Activated CD8-positive, alpha-beta T cell treated with anti-CD3 and anti-CD28 coated beads for 36 hours (primary cell): ENCODE measurements at regions of chr1 and their contacts with region 1.

Region 1: DNA sequence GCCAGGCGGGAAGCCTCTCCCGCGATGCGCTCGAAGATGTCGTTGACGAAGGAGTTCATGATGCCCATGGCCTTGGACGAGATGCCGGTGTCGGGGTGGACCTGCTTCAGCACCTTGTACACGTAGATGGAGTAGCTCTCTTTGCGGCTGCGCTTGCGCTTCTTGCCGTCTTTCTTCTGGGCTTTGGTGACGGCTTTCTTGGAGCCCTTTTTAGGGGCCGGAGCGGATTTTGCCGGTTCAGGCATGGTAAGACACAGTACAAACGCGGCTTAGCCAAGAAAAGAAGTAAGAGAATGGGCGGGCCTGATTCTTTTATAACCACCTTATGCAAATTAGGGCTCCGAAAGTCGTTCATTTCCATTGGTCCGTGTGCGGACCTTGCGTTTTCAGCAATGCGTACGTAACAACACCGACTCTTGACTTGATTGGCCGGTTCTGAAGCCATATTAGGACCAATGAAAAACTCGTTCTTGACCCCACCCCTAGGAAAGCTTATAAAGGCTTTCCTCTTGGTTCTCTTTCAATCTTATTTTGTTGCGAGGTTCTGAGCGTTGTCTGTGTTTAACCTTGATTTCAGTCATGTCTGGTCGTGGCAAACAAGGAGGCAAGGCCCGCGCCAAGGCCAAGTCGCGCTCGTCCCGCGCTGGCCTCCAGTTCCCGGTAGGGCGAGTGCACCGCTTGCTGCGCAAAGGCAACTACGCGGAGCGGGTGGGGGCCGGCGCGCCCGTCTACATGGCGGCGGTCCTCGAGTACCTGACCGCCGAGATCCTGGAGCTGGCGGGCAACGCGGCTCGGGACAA is 12.8 kb upstream of the BOLA1 start:
- DNase-seq: peak; percentile 88
- ATAC-seq: peak; percentile 57
- H3K4me3 Mint-ChIP-seq: no peak overlapping the region
- H3K27ac Mint-ChIP-seq: no peak overlapping the region
- H3K4me1 Mint-ChIP-seq: peaks cover 15% of the 10 kb centered on the region
- H3K27me3 Mint-ChIP-seq: peaks cover 2% of the 10 kb centered on the region
- CTCF ChIP-seq: no peak

Region 2: GRCh38 chr1:149899460-149900293 is 13.1 kb after region 1 on chr1 and contains the start of gene BOLA1:
- CTCF ChIA-PET with region 1: no interaction called
- POLR2A ChIA-PET with region 1: interaction called, 104 read pairs
- intact Hi-C with region 1: no loop called
- DNase-seq: peak; percentile 92
- ATAC-seq: peak; percentile 98
- H3K4me3 Mint-ChIP-seq: peak within 1 kb of the TSS; percentile 91
- H3K27ac Mint-ChIP-seq: peak within 1 kb of the TSS; percentile 96
- H3K4me1 Mint-ChIP-seq: peaks cover 20% of the 10 kb centered on the region
- H3K27me3 Mint-ChIP-seq: no peaks in the 10 kb centered on the region
- CTCF ChIP-seq: no peak
- total RNA-seq, gene BOLA1: 25.1 to 28.8 TPM

Region 3: DNA sequence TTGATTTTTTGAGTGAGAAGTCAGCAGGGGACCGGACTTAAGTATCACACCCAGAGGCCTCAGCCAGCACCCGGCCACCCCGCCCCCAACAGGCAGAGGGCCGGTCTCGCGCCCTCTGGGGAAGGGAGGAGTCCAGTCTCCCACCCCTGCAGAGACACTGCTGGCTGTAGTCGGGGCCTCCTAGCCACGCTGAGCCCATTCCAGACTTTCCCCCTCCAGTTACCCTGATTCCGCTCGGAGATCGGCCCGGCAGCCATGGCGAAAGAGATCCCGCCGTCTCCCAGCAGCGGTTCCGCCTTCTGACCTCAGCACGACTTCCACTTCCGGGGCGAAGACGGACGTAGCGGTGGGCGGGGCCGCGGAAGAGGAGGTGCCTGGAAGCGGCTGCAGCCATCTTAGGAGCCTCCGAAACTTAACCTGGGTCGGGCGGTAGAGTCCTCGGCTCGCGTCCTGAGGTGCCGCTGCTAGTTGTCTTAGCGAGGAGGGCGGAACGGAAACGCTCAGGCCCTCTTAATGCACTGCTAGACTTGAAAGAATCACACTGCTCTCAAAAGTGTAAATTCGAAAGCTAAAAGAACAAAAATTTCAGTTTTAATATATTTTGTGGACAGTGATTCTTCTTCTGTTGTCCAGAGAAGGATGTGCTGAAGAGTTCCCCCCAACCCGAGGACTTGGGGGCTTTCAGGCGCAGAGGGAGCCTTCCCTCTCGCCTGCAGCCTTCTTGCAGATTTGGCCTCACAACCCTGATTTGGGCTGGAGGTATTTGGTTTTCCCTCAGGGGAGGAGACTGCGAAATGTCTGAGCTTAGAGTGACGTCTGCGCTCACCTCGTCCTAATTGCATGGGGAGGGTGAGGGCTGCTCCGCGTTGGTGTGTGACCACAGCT is 41.1 kb after region 1 on chr1 and contains the start of gene SF3B4:
- CTCF ChIA-PET with region 1: interaction called, 4 read pairs
- POLR2A ChIA-PET with region 1: interaction called, 62 read pairs
- intact Hi-C with region 1: loop called (anchors 2 kb)
- DNase-seq: peak; percentile 97
- ATAC-seq: peak; percentile 97
- H3K4me3 Mint-ChIP-seq: peak within 1 kb of the TSS; percentile 99
- H3K27ac Mint-ChIP-seq: peak within 1 kb of the TSS; percentile 94
- H3K4me1 Mint-ChIP-seq: peaks cover 35% of the 10 kb centered on the region
- H3K27me3 Mint-ChIP-seq: no peaks in the 10 kb centered on the region
- CTCF ChIP-seq: no peak
- total RNA-seq, gene SF3B4: 67.1 to 67.6 TPM

Region 4: GRCh38 chr1:150010393-150011115 is 124.0 kb after region 1 on chr1 and contains the start of gene OTUD7B:
- CTCF ChIA-PET with region 1: no interaction called
- POLR2A ChIA-PET with region 1: interaction called, 35 read pairs
- intact Hi-C with region 1: no loop called
- DNase-seq: peak; percentile 80
- ATAC-seq: peak; percentile 84
- H3K4me3 Mint-ChIP-seq: peak within 1 kb of the TSS; percentile 96
- H3K27ac Mint-ChIP-seq: peak within 1 kb of the TSS; percentile 94
- H3K4me1 Mint-ChIP-seq: peaks cover 39% of the 10 kb centered on the region
- H3K27me3 Mint-ChIP-seq: no peaks in the 10 kb centered on the region
- CTCF ChIP-seq: no peak
- total RNA-seq, gene OTUD7B: 16.1 to 17.3 TPM

Region 5: DNA sequence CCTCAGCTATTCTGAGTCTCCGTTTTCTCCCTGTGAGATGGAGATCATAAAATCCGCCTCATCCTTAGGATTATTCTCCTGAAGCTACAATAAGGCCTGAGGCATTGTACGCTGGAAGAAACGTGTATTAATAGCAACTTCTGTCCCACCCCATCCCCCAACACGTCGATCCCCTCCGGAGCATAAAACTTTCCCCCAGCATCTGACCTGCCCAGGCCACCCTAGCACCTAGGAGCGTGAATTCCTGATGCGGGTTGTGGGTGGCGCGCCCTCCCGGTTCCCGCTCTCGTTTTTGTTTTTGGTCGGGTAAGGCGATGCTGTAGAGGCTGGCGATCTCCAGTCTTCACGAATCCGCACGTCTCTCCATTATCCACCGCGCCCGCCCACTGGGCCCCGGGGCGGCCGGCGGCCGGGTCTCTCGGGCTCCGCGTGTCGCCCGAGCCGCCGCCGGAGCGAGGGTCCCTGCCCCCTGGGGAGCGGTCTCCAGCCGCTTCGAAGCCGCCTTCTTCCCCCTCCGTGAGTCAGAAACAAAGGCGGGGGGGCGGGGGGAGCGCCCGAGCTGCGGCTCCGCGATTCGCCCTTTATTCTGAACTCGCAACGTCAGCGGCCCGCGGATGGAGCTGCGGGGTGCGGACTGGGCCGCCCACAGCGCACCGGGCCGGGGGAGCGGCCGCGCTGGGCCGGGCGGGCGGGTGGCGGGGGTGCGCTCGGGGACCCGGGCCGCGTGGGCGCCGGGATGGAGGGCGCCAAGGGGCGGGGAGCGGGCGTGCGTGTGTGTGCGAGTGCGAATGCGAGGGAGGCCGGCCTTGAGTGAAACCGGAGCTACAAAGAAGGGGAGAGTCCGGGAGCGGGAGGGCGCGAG is 262.9 kb after region 1 on chr1 and contains the start of gene PLEKHO1:
- CTCF ChIA-PET with region 1: no interaction called
- POLR2A ChIA-PET with region 1: interaction called, 12 read pairs
- intact Hi-C with region 1: no loop called
- DNase-seq: peak; percentile 87
- ATAC-seq: peak; percentile 71
- H3K4me3 Mint-ChIP-seq: peak within 1 kb of the TSS; percentile 83
- H3K27ac Mint-ChIP-seq: peak within 1 kb of the TSS; percentile 89
- H3K4me1 Mint-ChIP-seq: peaks cover 59% of the 10 kb centered on the region
- H3K27me3 Mint-ChIP-seq: peaks cover 1% of the 10 kb centered on the region
- CTCF ChIP-seq: no peak
- total RNA-seq, gene PLEKHO1: 18.2 to 19.0 TPM

Region 6: GRCh38 chr1:150186789-150187559 is 300.4 kb after region 1 on chr1:
- CTCF ChIA-PET with region 1: interaction called, 13 read pairs
- POLR2A ChIA-PET with region 1: interaction called, 15 read pairs
- intact Hi-C with region 1: no loop called
- DNase-seq: peak; percentile 34
- ATAC-seq: peak; percentile 79
- H3K4me3 Mint-ChIP-seq: peak overlapping the region; percentile 44
- H3K27ac Mint-ChIP-seq: peak overlapping the region; percentile 57
- H3K4me1 Mint-ChIP-seq: peaks cover 13% of the 10 kb centered on the region
- H3K27me3 Mint-ChIP-seq: no peaks in the 10 kb centered on the region
- CTCF ChIP-seq: peak; percentile 87